Naive thymus-derived CD4-positive, alpha-beta T cell (primary cell): ENCODE measurements at regions of chr1 and their contacts with region 1.

Region 1: GRCh38 chr1:206808615-206809014 is 36.3 kb upstream of the IL10 start:
- DNase-seq: peak in 7 of 9 donors; percentile 47 to 71 (median 58)
- ATAC-seq: peak; percentile 90
- H3K4me3 ChIP-seq: no peak overlapping the region
- H3K4me3 Mint-ChIP-seq: peak overlapping the region in 1 of 10 donors; percentile 8
- H3K27ac ChIP-seq: no peak overlapping the region
- H3K27ac Mint-ChIP-seq: peak overlapping the region in 8 of 9 donors; percentile 17 to 76 (median 51)
- H3K4me1 ChIP-seq: peaks cover 30 to 42% of the 10 kb centered on the region in 2 donors
- H3K4me1 Mint-ChIP-seq: peaks cover 24 to 61% (median 52%) of the 10 kb centered on the region in 7 donors
- H3K27me3 ChIP-seq: no peaks in the 10 kb centered on the region
- H3K27me3 Mint-ChIP-seq: peaks cover 0 to 12% (median 0%) of the 10 kb centered on the region in 5 donors

Region 2: DNA sequence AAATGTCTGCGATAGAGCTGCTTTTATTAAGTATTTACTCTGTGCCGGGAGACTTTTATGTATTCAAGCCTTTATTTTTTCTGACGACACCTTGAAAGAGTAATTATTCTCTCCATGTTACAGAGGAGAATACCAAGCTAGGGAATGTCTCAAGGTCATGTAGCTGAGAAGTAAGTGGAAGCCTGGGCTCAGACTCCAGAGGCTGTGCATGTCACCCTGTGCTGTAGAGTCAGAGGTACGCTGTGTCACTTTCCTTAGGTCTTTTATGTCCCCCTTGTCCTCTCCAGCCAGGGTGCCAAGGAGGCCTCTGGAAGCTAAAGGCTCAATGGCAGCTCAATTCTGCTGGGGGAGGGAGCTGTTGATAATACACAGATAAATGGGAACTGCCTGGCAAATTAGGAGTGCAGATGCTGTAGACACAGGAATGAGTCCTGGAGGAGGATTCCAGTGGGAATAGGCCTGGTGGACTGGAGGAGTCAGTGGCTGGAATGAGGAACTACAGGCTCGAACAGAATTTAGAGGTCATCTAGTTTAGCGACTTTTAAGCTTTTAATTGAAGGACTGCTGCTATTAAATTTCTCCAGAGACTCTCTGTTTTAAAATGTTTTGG is 47.4 kb before region 1 on chr1:
- CTCF ChIA-PET with region 1: interaction called, 8 read pairs
- POLR2A ChIA-PET with region 1: interaction called, 47 read pairs
- intact Hi-C with region 1: loop called (anchors 1 kb)
- DNase-seq: no peak
- ATAC-seq: no peak
- H3K4me3 ChIP-seq: no peak overlapping the region
- H3K4me3 Mint-ChIP-seq: peak overlapping the region in 1 of 10 donors; percentile 30
- H3K27ac ChIP-seq: no peak overlapping the region
- H3K27ac Mint-ChIP-seq: peak overlapping the region in 2 of 9 donors; percentile 29 to 47
- H3K4me1 ChIP-seq: peaks cover 45 to 52% of the 10 kb centered on the region in 2 donors
- H3K4me1 Mint-ChIP-seq: peaks cover 19 to 50% (median 42%) of the 10 kb centered on the region in 7 donors
- H3K27me3 ChIP-seq: no peaks in the 10 kb centered on the region
- H3K27me3 Mint-ChIP-seq: peaks cover 0 to 42% (median 0%) of the 10 kb centered on the region in 5 donors

Region 3: DNA sequence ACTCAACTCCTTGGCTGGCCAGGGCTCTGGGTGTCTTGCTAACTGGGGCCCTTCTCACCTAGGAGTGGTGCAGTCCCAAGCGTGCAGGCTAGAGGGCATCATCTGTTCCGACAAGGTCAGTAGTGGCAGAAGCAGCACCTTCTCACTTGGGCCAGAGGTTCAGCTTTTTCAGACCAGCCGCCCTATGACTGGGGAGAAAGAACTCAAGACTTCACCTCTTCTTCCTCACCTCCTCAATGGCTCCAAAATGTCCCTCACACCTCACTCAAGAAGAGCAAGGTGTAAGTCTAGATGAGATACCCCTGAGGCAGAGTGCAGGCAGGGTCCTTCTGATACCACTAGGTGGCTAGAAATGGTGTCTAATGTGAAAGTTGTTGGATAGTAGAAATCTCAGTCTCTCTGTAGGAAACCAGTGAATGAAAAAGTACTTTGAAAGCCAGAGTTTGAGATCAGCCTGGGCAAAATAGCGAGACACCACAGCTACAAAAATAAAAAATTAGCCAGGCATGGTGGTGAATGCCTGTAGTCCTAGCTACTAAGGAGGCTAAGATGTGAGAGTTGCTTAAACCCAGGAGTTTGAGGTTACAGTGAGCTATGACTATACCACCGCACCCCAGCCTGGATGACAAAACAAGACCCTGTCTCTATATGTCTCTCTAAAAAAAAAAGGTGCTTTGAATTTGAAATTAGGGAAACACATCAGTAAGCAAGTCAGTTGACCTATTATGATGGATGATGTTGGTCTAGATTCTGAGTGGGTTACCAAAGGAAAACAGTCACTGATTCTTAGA is 48.3 kb after region 1 on chr1:
- CTCF ChIA-PET with region 1: interaction called, 8 read pairs
- POLR2A ChIA-PET with region 1: interaction called, 4 read pairs
- intact Hi-C with region 1: loop called in 1 of 2 experiments (anchors 2 kb)
- DNase-seq: peak in 5 of 9 donors; percentile 19 to 32 (median 28)
- ATAC-seq: peak; percentile 54
- H3K4me3 ChIP-seq: no peak overlapping the region
- H3K4me3 Mint-ChIP-seq: no peak overlapping the region
- H3K27ac ChIP-seq: no peak overlapping the region
- H3K27ac Mint-ChIP-seq: peak overlapping the region in 1 of 9 donors; percentile 55
- H3K4me1 ChIP-seq: peaks cover 0 to 15% of the 10 kb centered on the region in 2 donors
- H3K4me1 Mint-ChIP-seq: peaks cover 7 to 31% (median 24%) of the 10 kb centered on the region in 7 donors
- H3K27me3 ChIP-seq: no peaks in the 10 kb centered on the region
- H3K27me3 Mint-ChIP-seq: peaks cover 0 to 32% (median 0%) of the 10 kb centered on the region in 5 donors

Region 4: DNA sequence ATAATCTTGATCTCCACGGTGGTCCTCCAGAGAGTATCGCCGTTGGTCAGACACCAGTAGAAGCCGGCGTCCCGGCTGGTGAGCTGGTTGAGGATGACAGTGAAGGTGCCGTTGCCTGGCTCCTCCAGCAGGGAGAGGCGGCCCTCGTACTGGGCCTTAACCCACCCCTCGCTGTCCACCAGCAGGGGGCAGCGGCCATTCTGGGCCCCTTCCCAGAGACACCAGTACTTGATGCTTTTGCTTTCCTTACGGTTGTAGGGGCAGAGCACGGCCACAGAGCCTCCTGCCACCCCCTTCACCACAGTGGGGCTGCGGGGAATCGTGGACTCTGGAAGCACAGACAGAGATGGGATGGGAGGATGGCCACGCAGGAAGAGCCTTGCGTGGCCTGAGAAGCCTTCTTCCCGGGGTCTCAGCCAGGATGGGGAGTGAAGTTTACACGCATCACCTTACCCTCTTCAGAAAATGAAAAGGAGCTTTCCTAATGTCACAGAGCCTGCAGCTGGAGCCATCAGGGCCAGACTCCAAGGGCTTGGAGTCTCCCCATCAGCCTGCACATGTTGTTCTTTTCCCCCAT is 127.0 kb after region 1 on chr1:
- CTCF ChIA-PET with region 1: interaction called, 39 read pairs
- POLR2A ChIA-PET with region 1: interaction called, 3 read pairs
- intact Hi-C with region 1: loop called in 1 of 2 experiments (anchors 1 kb)
- DNase-seq: peak in 4 of 9 donors; percentile 28 to 56 (median 48)
- ATAC-seq: peak; percentile 68
- H3K4me3 ChIP-seq: no peak overlapping the region
- H3K4me3 Mint-ChIP-seq: no peak overlapping the region
- H3K27ac ChIP-seq: no peak overlapping the region
- H3K27ac Mint-ChIP-seq: peak overlapping the region in 1 of 9 donors; percentile 12
- H3K4me1 ChIP-seq: peaks cover 6 to 12% of the 10 kb centered on the region in 2 donors
- H3K4me1 Mint-ChIP-seq: peaks cover 2 to 31% (median 29%) of the 10 kb centered on the region in 7 donors
- H3K27me3 ChIP-seq: no peaks in the 10 kb centered on the region
- H3K27me3 Mint-ChIP-seq: peaks cover 0 to 8% (median 0%) of the 10 kb centered on the region in 5 donors